ENCODE measurements at regions of chr3 and their contacts with region 1.

Region 1: GRCh38 chr3:163490119-163490518 is 1588.2 kb downstream of the SI start:
- DNase-seq: no peak
- H3K4me3 Mint-ChIP-seq: no peak overlapping the region
- H3K27ac Mint-ChIP-seq: no peak overlapping the region
- H3K4me1 Mint-ChIP-seq: no peaks in the 10 kb centered on the region
- H3K27me3 Mint-ChIP-seq: no peaks in the 10 kb centered on the region

Region 2: DNA sequence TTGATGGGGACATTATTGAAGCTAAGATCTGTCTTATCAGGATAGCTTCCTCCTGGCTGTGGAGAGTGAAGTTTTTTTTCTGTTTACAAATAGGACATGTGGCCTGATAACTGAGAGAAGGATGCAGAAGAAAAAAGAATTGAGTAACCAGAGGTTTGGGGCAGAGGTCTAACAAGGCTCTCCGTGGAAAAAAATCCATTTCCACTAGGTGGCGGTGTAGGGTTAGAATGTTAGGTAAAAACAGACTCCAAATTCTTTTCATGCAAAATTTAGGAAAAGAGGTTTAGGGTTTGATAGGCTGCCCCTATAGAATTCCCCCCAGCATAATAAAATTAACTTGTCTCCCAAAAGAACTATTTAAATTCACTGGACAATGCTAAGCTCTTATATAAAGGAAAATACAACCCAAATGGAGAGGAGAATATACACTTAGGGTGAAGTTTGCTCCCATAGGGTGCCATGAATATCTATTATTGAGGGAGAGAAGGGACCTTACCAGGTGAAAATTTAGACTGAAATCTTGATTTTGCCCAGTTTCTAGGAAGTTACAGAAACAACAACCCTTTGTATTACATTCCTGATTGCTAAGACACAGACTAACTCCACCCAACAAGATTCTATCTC is 433.1 kb before region 1 on chr3:
- intact Hi-C with region 1: loop called (anchors 10 kb)
- DNase-seq: no peak
- H3K4me3 Mint-ChIP-seq: no peak overlapping the region
- H3K27ac Mint-ChIP-seq: no peak overlapping the region
- H3K4me1 Mint-ChIP-seq: no peaks in the 10 kb centered on the region
- H3K27me3 Mint-ChIP-seq: no peaks in the 10 kb centered on the region

Measured in activated T-helper 2 cell treated with anti-CD3 and anti-CD28 coated beads, Interferon-gamma antibody, Interleukin-2, Interleukin-4, amounts not matched to agents 10 μg/mL and 5 μg/mL and 100 μg/mL, durations not matched to agents 14 hours and 24 hours and 36 hours (primary cell).